Gastrocnemius medialis (tissue), 4 donors: ENCODE measurements at regions of chr6 and their contacts with region 1.

Region 1: GRCh38 chr6:125790358-125791150 is at the start of gene NCOA7:
- DNase-seq: peak; percentile 67 to 71
- ATAC-seq: peak; percentile 83 to 85
- H3K4me3 ChIP-seq: peak within 1 kb of the TSS; percentile 76 to 97 (median 89)
- H3K27ac ChIP-seq: peak within 1 kb of the TSS; percentile 90 to 98 (median 92)
- H3K4me1 ChIP-seq: peaks cover 19% of the 10 kb centered on the region in 2 donors
- H3K27me3 ChIP-seq: no peaks in the 10 kb centered on the region
- CTCF ChIP-seq: peak in 2 of 5 experiments; percentile 17 to 27
- POLR2A ChIP-seq: peak; percentile 81 to 86
- total RNA-seq, gene NCOA7: 7.0 to 9.5 (median 9.2) TPM

Region 2: DNA sequence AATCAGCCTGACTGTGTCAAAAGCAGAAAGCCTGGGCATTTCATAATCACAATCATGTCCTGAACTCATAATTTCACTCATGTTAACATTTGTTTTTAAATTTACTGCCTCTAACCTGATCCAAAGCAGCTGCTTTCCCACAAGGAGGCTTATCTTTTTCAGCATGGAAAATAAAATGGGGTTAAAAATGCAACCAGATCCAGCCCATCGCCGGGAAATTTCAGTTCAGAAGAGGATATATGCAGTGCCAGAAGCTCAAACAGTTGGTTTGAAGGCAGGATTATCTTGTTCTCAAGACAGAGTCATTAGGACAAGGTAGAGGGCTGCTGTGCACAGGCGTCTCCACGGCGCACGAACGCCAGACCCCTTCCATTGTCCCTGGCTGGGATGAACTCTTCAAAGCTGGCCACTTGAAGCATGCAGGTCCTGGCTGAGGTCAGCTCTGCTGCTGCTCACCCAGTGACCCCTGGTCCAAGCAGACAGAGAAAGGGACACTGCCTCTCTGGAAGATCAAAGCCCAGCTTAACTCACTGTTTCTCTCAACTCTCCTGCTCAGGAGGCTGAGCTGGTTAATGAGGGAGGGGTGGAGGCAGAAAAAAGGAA is 232.2 kb before region 1 on chr6:
- in situ Hi-C with region 1: no loop called
- intact Hi-C with region 1: no loop called
- DNase-seq: no peak
- ATAC-seq: no peak
- H3K4me3 ChIP-seq: no peak overlapping the region
- H3K27ac ChIP-seq: no peak overlapping the region
- H3K4me1 ChIP-seq: no peaks in the 10 kb centered on the region
- H3K27me3 ChIP-seq: no peaks in the 10 kb centered on the region
- CTCF ChIP-seq: no peak
- POLR2A ChIP-seq: no peak

Region 3: DNA sequence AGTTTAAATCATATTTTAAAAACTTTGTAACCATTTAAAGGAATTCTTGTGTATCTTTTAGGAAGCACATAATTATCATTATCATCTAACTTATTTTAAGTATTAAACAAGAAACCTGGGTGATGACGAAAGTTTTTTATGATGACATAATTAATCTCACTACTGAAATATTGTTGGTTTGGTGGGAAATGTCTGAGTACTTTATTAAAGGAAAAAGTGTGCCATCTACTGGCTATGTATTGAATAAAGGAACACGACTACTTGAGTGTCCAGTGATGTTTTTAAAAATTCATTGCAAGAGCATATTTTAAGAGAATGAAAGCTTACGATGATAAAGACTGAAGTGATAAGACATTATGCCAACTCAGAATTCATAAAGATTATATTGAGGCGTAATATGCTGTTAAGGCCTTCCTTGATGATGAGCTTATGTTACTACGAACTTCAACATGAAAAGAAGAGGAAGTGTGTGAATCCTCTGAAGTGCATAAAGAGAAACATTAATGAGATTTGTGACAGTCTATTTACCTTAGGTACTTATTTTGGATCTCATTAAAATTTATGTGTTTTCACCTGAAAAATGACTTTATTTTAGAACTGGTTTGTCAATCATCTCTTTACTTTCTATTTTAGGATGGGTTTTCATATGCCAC is 183.8 kb after region 1 on chr6:
- in situ Hi-C with region 1: loop called in 2 of 4 experiments (anchors 5 to 10 kb)
- intact Hi-C with region 1: no loop called
- DNase-seq: no peak
- ATAC-seq: peak in 1 of 2 donors; percentile 49
- H3K4me3 ChIP-seq: no peak overlapping the region
- H3K27ac ChIP-seq: no peak overlapping the region
- H3K4me1 ChIP-seq: no peaks in the 10 kb centered on the region
- H3K27me3 ChIP-seq: no peaks in the 10 kb centered on the region
- CTCF ChIP-seq: peak in 2 of 5 experiments; percentile 45 to 51
- POLR2A ChIP-seq: no peak